CD4-positive, alpha-beta T cell (primary cell): ENCODE measurements at regions of chr7 and their contacts with region 1.

Region 1: GRCh38 chr7:101244375-101245146 is at the start of gene FIS1:
- DNase-seq: peak; percentile 84 to 96 (median 90)
- ATAC-seq: peak; percentile 94
- H3K4me3 ChIP-seq: peak within 1 kb of the TSS; percentile 87
- H3K4me3 Mint-ChIP-seq: peak within 1 kb of the TSS; percentile 98
- H3K27ac ChIP-seq: peak within 1 kb of the TSS; percentile 91 to 92
- H3K27ac Mint-ChIP-seq: peak within 1 kb of the TSS; percentile 96
- H3K4me1 ChIP-seq: peaks cover 23% of the 10 kb centered on the region
- H3K4me1 Mint-ChIP-seq: peaks cover 44% of the 10 kb centered on the region
- H3K27me3 ChIP-seq: no peaks in the 10 kb centered on the region
- H3K27me3 Mint-ChIP-seq: no peaks in the 10 kb centered on the region
- CTCF ChIP-seq: peak; percentile 99
- total RNA-seq, gene FIS1: 81.2 to 82.3 TPM

Region 2: GRCh38 chr7:100874577-100875355 is 369.8 kb before region 1 on chr7 and contains the start of gene SRRT:
- CTCF ChIA-PET with region 1: interaction called, 4 read pairs
- POLR2A ChIA-PET with region 1: interaction called, 4 read pairs
- intact Hi-C with region 1: loop called in 1 of 2 experiments (anchors 5 kb)
- DNase-seq: peak; percentile 98 to 99 (median 98)
- ATAC-seq: peak; percentile 95
- H3K4me3 ChIP-seq: peak within 1 kb of the TSS; percentile 96
- H3K4me3 Mint-ChIP-seq: peak within 1 kb of the TSS; percentile 100
- H3K27ac ChIP-seq: peak within 1 kb of the TSS; percentile 91
- H3K27ac Mint-ChIP-seq: peak within 1 kb of the TSS; percentile 96
- H3K4me1 ChIP-seq: peaks cover 48% of the 10 kb centered on the region
- H3K4me1 Mint-ChIP-seq: peaks cover 49% of the 10 kb centered on the region
- H3K27me3 ChIP-seq: no peaks in the 10 kb centered on the region
- H3K27me3 Mint-ChIP-seq: no peaks in the 10 kb centered on the region
- CTCF ChIP-seq: no peak
- total RNA-seq, gene SRRT: 355 to 382 TPM

Region 3: GRCh38 chr7:101186844-101187428 is 57.6 kb before region 1 on chr7:
- CTCF ChIA-PET with region 1: interaction called, 14 read pairs
- POLR2A ChIA-PET with region 1: no interaction called
- intact Hi-C with region 1: no loop called
- DNase-seq: no peak
- ATAC-seq: no peak
- H3K4me3 ChIP-seq: no peak overlapping the region
- H3K4me3 Mint-ChIP-seq: no peak overlapping the region
- H3K27ac ChIP-seq: no peak overlapping the region
- H3K27ac Mint-ChIP-seq: no peak overlapping the region
- H3K4me1 ChIP-seq: peaks cover 4% of the 10 kb centered on the region
- H3K4me1 Mint-ChIP-seq: no peaks in the 10 kb centered on the region
- H3K27me3 ChIP-seq: peaks cover 8 to 14% of the 10 kb centered on the region in 2 experiments
- H3K27me3 Mint-ChIP-seq: peaks cover 35% of the 10 kb centered on the region
- CTCF ChIP-seq: no peak

Region 4: GRCh38 chr7:101287032-101287431 is 42.5 kb after region 1 on chr7:
- CTCF ChIA-PET with region 1: interaction called, 11 read pairs
- POLR2A ChIA-PET with region 1: interaction called, 3 read pairs
- intact Hi-C with region 1: no loop called
- DNase-seq: peak in 1 of 14 experiments; percentile 26
- ATAC-seq: no peak
- H3K4me3 ChIP-seq: no peak overlapping the region
- H3K4me3 Mint-ChIP-seq: no peak overlapping the region
- H3K27ac ChIP-seq: no peak overlapping the region
- H3K27ac Mint-ChIP-seq: no peak overlapping the region
- H3K4me1 ChIP-seq: peaks cover 13% of the 10 kb centered on the region
- H3K4me1 Mint-ChIP-seq: peaks cover 8% of the 10 kb centered on the region
- H3K27me3 ChIP-seq: peaks cover 4 to 6% of the 10 kb centered on the region in 2 experiments
- H3K27me3 Mint-ChIP-seq: peaks cover 26% of the 10 kb centered on the region
- CTCF ChIP-seq: no peak